Common myeloid progenitor, CD34-positive (primary cell): ENCODE measurements at regions of chr11 and their contacts with region 1.

Region 1: DNA sequence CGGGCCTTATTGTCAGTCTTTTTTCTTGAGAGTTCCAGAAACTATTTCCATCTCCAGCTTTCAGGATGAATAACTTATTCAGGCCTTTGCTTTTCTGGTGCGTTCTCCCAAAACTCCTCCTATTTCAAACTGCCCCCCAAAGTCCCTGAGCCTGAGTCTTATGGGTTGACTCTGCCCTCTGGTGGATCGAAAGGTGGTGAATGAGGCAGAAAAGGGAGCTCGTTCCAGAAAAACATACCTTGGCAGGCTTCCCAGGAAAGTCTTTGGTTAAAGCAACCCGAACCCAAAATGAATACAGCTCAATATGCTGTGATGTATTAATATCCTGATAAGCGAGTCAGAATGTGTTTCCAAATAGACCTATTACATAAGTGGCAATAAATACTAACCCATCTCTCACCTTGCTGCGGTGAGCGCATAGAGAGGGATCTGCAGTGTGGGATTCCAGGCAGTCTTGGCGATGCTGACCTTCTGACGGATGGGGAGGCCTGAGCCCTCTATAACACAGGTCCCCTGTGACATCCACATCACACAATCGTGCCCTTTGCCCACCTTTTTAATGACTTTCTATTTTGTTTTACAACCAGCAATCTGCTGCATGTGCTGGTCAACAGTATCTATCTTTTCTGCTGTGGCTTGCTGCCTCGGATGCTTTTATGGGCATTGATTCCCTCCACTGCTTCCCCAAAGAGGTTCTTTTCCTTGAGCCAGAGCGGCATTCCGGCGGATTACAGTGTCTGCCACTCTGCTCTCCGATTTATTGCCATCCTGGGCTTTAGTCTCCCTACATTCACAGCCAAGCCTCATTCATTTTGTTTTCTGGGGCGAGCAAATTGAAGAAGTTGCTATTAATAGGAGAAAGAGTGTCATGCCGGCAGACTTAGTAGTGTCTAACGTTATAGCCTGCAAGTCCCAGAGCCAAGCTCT is 756.8 kb downstream of the NTM start:
- DNase-seq: peak; percentile 22 to 38 (median 38)
- H3K4me3 ChIP-seq: peak overlapping the region in 3 of 7 experiments; percentile 57 to 70 (median 68)
- H3K27ac ChIP-seq: no peak overlapping the region
- H3K4me1 ChIP-seq: peaks cover 0 to 7% (median 2%) of the 10 kb centered on the region in 4 experiments
- H3K27me3 ChIP-seq: peaks cover 0 to 18% (median 10%) of the 10 kb centered on the region in 5 experiments

Region 2: DNA sequence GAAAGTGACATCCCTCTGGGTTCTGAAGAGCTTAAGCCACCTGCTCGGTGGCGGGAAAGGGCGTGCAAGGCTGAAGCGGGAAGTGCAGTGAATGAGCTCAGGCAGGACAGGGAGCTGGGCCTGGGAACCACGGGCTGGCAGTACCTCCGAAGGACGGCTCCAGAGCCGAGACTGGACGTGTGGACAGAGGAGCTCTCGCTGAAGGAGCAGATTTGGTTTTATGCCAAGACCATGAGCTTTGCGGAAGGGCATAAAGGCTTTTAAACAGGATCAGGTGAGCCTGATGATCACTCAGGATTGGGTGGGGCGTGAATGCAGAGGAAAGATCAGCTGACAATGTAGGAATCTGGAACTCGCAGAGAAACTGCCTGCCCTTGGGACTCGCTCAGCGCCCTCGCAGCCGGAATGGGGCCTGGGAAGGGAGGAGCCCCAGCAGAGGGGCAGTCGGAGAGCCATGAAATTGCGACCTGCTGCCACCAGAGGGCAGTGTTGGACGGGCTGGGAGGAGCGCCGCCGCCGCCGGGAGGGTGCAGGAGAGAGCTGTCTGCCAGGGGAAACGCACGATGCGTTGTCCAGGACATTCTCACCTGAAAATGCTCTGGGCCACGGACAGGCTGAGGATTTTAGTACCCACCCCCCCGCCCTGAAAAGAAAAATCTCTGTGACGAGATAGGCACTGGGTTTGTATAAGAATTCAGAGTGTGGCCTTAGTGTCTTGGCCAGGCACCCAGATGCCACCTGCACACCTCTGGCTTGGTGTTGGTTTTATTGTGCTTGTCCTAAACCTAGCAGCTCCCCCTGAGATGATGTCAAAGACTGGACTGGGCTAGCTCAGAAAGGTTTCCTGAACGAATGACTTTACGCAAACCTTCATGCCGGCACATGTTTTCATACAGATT is 432.5 kb before region 1 on chr11:
- CTCF ChIA-PET with region 1: interaction called, 12 read pairs
- POLR2A ChIA-PET with region 1: no interaction called
- DNase-seq: peak; percentile 60 to 77 (median 73)
- H3K4me3 ChIP-seq: peak overlapping the region in 1 of 7 experiments; percentile 46
- H3K27ac ChIP-seq: no peak overlapping the region
- H3K4me1 ChIP-seq: peaks cover 0 to 3% (median 0%) of the 10 kb centered on the region in 4 experiments
- H3K27me3 ChIP-seq: peaks cover 6 to 62% (median 10%) of the 10 kb centered on the region in 5 experiments

Region 3: DNA sequence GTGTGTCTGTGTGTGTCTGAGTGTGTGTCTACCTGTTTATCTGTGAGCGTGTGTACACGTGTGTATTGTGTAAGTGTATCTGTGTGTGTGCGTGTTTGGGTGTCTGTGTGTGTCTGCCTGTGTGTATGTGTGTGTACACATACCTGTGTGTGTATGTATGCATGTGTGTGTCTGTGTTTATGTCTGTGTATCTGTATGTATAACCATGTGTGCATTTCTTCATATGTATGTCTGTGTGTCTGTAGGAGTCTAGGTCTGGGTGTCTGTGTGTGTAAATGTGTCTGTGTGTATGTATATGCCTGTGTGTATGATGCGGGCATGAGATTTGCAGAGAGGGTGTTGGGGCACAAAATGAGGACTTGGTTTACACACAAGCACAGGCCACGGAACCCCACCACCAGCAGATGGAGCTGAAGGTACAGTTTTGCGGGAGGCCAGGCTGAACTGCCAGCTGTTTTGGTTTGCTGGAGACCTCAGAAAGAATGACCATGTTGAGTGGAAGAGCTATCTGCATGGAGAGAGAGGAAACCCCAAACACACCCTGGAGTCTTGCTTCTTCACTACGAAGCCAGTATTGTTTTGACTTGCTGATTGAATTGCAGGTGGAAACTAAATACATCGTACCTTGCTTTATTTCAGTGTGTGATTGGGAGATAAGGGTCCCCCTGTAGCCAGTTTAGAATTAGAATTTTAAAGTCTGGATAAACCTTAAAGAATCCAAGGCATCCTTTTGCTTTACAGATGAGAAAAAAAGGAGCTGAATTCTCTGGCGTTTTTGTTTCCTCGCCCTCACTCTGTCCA is 259.6 kb before region 1 on chr11:
- CTCF ChIA-PET with region 1: interaction called, 18 read pairs
- POLR2A ChIA-PET with region 1: no interaction called
- DNase-seq: peak; percentile 48 to 73 (median 71)
- H3K4me3 ChIP-seq: no peak overlapping the region
- H3K27ac ChIP-seq: no peak overlapping the region
- H3K4me1 ChIP-seq: no peaks in the 10 kb centered on the region
- H3K27me3 ChIP-seq: peaks cover 0 to 3% (median 0%) of the 10 kb centered on the region in 5 experiments

Region 4: GRCh38 chr11:132142554-132142953 is 15.3 kb after region 1 on chr11:
- CTCF ChIA-PET with region 1: no interaction called
- POLR2A ChIA-PET with region 1: no interaction called
- DNase-seq: no peak
- H3K4me3 ChIP-seq: no peak overlapping the region
- H3K27ac ChIP-seq: no peak overlapping the region
- H3K4me1 ChIP-seq: no peaks in the 10 kb centered on the region
- H3K27me3 ChIP-seq: peaks cover 0 to 2% (median 0%) of the 10 kb centered on the region in 5 experiments

Region 5: GRCh38 chr11:132158093-132158492 is 30.9 kb after region 1 on chr11:
- CTCF ChIA-PET with region 1: no interaction called
- POLR2A ChIA-PET with region 1: no interaction called
- DNase-seq: peak; percentile 2 to 20 (median 7)
- H3K4me3 ChIP-seq: no peak overlapping the region
- H3K27ac ChIP-seq: no peak overlapping the region
- H3K4me1 ChIP-seq: no peaks in the 10 kb centered on the region
- H3K27me3 ChIP-seq: no peaks in the 10 kb centered on the region